Activated CD8-positive, alpha-beta T cell treated with anti-CD3 and anti-CD28 coated beads, Interleukin-2, amount 10 ng/mL, durations not matched to agents 7 days and 5 days (primary cell): ENCODE measurements at regions of chr7 and their contacts with region 1.

Region 1: DNA sequence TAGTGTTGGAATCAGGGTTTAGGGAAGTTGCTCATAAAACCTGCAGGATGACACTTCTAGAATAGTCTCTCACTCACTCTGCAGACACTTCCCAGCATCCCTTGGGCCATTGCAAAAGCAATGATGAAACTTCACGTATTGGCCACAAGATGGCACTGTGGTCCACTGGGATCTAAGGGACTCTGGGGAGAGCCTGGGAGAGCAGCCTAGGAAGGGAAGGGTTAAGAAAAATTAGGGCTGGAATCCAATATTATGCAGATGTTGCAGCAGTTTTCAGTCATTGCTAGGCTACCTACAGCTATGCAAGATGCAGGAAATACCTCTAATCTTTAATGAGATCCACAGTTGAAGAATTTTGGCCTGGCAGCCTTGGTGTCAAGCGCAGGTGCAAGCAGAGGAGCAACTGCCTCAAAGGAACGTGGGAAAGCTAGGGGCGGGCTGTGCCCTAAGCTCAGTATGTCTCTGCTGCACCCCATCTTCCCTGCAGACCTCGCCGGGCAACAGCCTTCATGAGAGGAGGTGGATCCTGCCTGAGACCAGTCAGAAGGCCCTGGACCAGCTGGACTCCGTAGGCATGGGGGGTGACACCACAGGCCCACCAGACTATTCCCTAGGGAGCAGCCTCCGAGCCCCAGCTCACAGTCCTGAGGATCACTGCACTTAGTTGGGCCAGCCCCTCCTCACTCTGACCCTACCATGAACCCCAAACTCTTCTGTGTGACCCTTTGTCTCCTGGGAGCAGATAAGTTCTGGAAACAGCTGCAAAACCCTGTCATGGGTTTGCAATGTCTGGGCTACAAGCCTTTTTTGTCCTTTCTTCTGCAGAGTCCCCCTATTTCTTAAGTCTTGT is 127.9 kb upstream of the PRSS58 start:
- DNase-seq: peak; percentile 67
- ATAC-seq: peak; percentile 58
- H3K4me3 Mint-ChIP-seq: peak overlapping the region; percentile 22
- H3K27ac Mint-ChIP-seq: peak overlapping the region; percentile 26
- H3K4me1 Mint-ChIP-seq: peaks cover 36% of the 10 kb centered on the region
- H3K27me3 Mint-ChIP-seq: no peaks in the 10 kb centered on the region

Region 2: GRCh38 chr7:142357953-142358520 is 27.7 kb before region 1 on chr7:
- CTCF ChIA-PET with region 1: interaction called, 109 read pairs
- POLR2A ChIA-PET with region 1: interaction called, 3 read pairs
- DNase-seq: peak; percentile 51
- ATAC-seq: peak; percentile 43
- H3K4me3 Mint-ChIP-seq: no peak overlapping the region
- H3K27ac Mint-ChIP-seq: no peak overlapping the region
- H3K4me1 Mint-ChIP-seq: peaks cover 35% of the 10 kb centered on the region
- H3K27me3 Mint-ChIP-seq: peaks cover 25% of the 10 kb centered on the region

Region 3: DNA sequence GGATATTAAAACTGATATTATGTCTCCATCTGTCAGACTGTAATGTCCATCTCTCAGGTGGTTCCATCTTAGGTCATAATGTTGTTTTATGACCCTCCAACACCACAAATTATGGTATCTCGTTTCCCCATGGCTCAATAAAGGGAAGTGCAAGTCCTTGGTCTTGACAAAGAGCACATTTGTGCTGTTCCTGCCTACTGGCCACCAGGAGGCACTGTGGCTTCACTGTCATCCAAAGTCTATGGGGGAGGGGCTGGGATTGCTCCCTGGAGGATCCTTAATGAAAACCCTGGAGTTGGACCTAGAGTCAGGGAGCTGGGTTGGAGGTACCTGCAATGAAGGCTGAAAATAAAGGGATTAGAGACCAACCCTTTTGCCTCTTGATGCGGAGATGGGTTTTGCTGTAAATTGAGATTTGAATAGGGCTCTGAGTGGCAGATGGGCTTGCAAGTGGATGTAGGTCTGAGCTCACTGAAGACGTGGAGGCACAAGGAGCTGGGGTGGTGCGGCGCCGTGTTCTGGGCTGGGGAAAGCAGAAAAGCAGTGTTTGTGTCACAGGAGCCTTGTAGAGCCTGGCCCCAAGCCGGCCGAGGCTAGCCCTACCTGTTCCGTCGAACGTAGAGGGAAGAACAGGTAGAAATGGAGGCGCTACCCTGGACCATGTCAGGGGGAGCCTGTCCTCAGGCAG is 52.7 kb after region 1 on chr7:
- CTCF ChIA-PET with region 1: interaction called, 12 read pairs
- POLR2A ChIA-PET with region 1: no interaction called
- DNase-seq: peak; percentile 51
- ATAC-seq: no peak
- H3K4me3 Mint-ChIP-seq: no peak overlapping the region
- H3K27ac Mint-ChIP-seq: no peak overlapping the region
- H3K4me1 Mint-ChIP-seq: peaks cover 56% of the 10 kb centered on the region
- H3K27me3 Mint-ChIP-seq: no peaks in the 10 kb centered on the region

Region 4: GRCh38 chr7:142478479-142479072 is 92.9 kb after region 1 on chr7:
- CTCF ChIA-PET with region 1: interaction called, 18 read pairs
- POLR2A ChIA-PET with region 1: no interaction called
- DNase-seq: peak; percentile 53
- ATAC-seq: peak; percentile 32
- H3K4me3 Mint-ChIP-seq: no peak overlapping the region
- H3K27ac Mint-ChIP-seq: no peak overlapping the region
- H3K4me1 Mint-ChIP-seq: peaks cover 56% of the 10 kb centered on the region
- H3K27me3 Mint-ChIP-seq: no peaks in the 10 kb centered on the region